ENCODE measurements at regions of chr2 and their contacts with region 1.

Region 1: GRCh38 chr2:235116885-235117492 is 165.2 kb downstream of the SH3BP4 start:
- DNase-seq: peak in 1 of 2 donors; percentile 59
- H3K4me3 ChIP-seq: no peak overlapping the region
- H3K27ac ChIP-seq: no peak overlapping the region
- H3K4me1 ChIP-seq: no peaks in the 10 kb centered on the region
- H3K27me3 ChIP-seq: peaks cover 0 to 7% (median 0%) of the 10 kb centered on the region in 3 donors
- CTCF ChIP-seq: peak in 5 of 7 experiments; percentile 37 to 71 (median 62)
- EP300 ChIP-seq: no peak
- POLR2A ChIP-seq: no peak

Region 2: DNA sequence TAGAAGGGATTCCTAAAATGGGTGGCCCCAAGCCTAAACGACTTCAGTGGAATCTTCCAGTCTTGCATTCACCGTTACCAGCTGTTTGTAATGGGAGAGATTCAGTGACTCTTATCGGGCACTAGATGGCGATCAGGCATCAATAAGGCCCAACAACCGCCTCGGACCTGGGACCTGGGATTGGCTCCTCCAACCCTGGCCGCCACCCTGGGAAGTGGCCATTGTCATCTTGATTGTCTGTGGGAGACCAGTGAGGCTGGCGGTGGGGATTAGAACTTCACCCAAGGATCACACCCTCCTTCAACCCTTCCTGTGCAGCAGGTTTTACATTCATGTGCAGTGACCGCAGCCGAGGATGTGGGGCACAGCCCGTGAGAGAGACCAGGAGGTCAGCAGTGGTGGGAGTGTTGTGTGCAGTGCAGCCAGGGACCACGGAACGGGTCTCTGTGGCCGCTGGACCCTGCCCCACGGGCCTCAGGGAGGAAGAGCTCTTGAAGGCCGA is 981.2 kb before region 1 on chr2:
- intact Hi-C with region 1: loop called (anchors 10 kb)
- DNase-seq: peak; percentile 53 to 87
- H3K4me3 ChIP-seq: no peak overlapping the region
- H3K27ac ChIP-seq: no peak overlapping the region
- H3K4me1 ChIP-seq: peaks cover 0 to 14% (median 4%) of the 10 kb centered on the region in 4 donors
- H3K27me3 ChIP-seq: peaks cover 0 to 10% (median 0%) of the 10 kb centered on the region in 3 donors
- CTCF ChIP-seq: peak in 5 of 7 experiments; percentile 44 to 71 (median 63)
- EP300 ChIP-seq: no peak
- POLR2A ChIP-seq: no peak

Region 3: DNA sequence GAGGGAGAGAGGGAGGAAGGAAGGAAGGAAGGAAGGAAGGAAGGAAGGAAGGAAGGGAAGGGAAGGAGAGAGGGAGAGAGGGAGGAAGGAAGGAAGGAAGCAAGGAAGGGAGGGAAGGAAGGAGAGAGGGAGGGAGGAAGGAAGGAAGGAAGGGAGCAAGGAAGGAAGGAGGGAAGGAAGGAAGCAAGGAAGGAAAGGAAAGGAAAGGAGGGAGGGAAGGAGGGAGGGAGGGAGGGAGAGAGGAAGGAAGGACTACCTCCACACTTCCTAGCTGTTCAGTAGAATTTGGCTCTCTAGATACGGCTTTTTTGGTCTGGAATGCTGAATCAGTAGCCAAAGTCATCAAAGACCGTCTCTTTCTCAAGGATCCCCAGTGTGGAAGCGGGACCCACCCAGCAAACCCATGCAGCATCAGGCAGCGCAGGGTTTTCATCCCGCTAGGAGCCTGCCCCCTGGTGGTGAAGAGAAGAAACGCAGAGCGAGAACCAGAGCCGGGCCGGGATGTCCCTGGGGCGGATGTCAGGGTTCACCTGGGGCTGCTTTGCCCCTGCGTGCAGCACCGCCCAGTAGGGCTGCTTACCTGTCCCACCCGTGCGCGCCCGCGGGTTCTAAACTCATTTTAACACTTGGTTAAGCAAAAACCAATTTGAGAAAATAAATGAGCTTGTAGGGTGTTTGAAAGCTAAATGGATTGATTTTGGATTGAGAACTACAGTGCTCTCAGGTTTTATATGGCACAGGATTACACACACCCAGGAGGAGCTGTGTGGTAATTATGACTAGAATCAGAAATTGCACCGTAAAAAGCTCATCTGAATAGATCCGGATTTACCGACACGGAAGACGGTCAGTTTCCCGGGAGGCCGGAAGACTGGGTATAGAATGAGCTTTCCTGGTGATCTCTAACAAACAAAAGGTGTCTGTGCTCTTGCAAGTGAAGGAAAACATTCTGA is 572.1 kb before region 1 on chr2:
- intact Hi-C with region 1: loop called (anchors 5 kb)
- DNase-seq: peak; percentile 75 to 84
- H3K4me3 ChIP-seq: no peak overlapping the region
- H3K27ac ChIP-seq: no peak overlapping the region
- H3K4me1 ChIP-seq: peaks cover 0 to 5% (median 2%) of the 10 kb centered on the region in 4 donors
- H3K27me3 ChIP-seq: peaks cover 0 to 31% (median 0%) of the 10 kb centered on the region in 3 donors
- CTCF ChIP-seq: peak in 5 of 7 experiments; percentile 50 to 96 (median 91)
- EP300 ChIP-seq: no peak
- POLR2A ChIP-seq: no peak

Measured in stomach (tissue), 19 donors.